Activated CD8-positive, alpha-beta T cell treated with anti-CD3 and anti-CD28 coated beads for 36 hours (primary cell): ENCODE measurements at regions of chr5 and their contacts with region 1.

Region 1: GRCh38 chr5:174311531-174312269 is 266.2 kb downstream of the NSG2 start:
- DNase-seq: peak; percentile 73
- ATAC-seq: peak; percentile 74
- H3K4me3 Mint-ChIP-seq: no peak overlapping the region
- H3K27ac Mint-ChIP-seq: no peak overlapping the region
- H3K4me1 Mint-ChIP-seq: no peaks in the 10 kb centered on the region
- H3K27me3 Mint-ChIP-seq: peaks cover 23% of the 10 kb centered on the region
- CTCF ChIP-seq: peak; percentile 90

Region 2: DNA sequence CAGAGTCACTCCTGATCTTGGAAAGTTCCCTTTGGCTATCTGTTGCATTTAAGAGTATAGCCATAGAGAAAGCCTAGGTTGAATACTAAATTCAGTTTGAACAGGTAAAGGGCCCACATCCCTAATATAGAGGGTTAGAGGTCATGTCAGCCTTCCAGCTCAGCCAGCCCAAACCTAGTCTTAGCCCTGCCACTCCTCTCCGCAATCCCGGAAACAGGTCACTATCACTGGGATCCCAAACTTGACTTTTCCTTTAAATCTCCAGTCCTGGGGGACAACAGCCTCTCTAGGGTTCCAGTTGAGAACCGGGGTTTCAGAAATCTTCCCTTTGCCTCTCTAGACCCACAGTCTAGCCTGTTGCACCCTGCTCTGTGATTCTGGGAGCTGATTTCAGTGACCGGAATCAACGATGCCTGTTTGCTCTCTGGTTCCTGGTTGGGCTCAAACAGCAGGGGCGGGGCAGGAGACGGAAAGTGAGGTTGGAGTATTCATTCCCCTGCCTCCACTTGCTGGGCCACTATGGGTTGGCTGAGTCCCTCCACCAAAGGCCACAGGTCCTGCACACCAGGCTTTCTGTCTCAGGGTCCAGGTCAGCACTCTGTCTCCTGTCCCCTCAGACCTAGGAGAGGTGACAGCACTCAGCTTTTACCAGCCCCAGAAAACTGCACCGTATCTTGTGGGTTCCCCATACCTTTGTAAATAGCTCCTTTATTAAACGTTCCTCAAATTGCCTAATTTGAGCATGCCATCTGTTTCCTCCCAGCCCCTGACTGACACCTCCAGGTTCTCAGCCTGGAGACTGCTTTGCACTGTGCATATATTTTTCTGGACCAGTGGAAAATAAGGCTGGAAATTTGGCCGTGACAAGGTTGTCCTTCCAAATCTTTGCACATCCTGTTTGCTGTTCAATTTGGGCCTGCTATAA is 447.3 kb before region 1 on chr5:
- CTCF ChIA-PET with region 1: no interaction called
- POLR2A ChIA-PET with region 1: no interaction called
- intact Hi-C with region 1: no loop called
- DNase-seq: no peak
- ATAC-seq: no peak
- H3K4me3 Mint-ChIP-seq: no peak overlapping the region
- H3K27ac Mint-ChIP-seq: no peak overlapping the region
- H3K4me1 Mint-ChIP-seq: no peaks in the 10 kb centered on the region
- H3K27me3 Mint-ChIP-seq: no peaks in the 10 kb centered on the region
- CTCF ChIP-seq: no peak

Region 3: DNA sequence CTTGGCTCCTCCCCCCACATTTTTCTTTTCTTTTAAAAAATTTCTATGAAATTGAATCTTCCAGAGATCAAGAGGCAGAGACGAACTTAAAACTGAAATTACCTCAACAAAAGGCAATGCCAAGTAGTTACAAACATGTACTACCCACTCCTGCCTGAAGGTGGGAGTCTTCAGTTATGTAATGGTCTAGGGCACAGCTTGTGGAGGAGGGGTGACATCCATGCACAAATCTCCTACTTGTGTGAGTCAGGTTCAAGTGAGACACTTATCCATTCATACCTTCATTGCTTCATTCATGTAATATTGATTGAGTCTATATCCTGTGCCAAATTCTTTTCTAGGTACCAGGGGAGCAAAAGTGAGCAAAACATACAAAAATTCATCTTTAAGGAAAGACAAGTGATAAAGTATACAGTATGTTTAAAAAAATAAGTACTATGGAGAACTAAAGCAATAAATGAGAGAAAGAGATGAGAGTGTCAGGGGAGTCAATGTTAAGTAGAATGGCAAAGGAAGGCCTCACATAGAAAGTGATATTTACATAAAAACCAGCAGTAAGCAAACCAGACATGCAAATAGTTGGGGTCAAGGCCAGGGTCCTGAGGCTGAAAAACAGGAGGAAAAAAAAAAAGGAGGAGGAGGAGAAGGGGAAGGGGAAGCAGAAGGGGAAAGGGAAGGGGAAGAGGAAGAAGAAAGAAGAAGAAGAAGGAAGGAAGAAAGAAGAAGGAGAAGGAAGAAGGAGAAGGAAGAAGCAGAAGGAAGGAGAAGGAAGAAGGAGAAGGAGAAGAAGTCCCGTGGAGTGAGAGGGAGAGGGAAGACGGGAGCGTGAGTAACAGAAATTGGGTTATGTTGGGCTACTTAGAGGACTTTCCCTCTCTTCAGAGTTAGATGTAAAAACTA is 291.1 kb before region 1 on chr5:
- CTCF ChIA-PET with region 1: interaction called, 4 read pairs
- POLR2A ChIA-PET with region 1: no interaction called
- intact Hi-C with region 1: loop called (anchors 5 kb)
- DNase-seq: peak; percentile 37
- ATAC-seq: no peak
- H3K4me3 Mint-ChIP-seq: no peak overlapping the region
- H3K27ac Mint-ChIP-seq: no peak overlapping the region
- H3K4me1 Mint-ChIP-seq: no peaks in the 10 kb centered on the region
- H3K27me3 Mint-ChIP-seq: peaks cover 24% of the 10 kb centered on the region
- CTCF ChIP-seq: peak; percentile 30

Region 4: GRCh38 chr5:174177976-174178555 is 133.6 kb before region 1 on chr5:
- CTCF ChIA-PET with region 1: no interaction called
- POLR2A ChIA-PET with region 1: no interaction called
- intact Hi-C with region 1: no loop called
- DNase-seq: no peak
- ATAC-seq: no peak
- H3K4me3 Mint-ChIP-seq: no peak overlapping the region
- H3K27ac Mint-ChIP-seq: no peak overlapping the region
- H3K4me1 Mint-ChIP-seq: no peaks in the 10 kb centered on the region
- H3K27me3 Mint-ChIP-seq: peaks cover 17% of the 10 kb centered on the region
- CTCF ChIP-seq: no peak

Region 5: GRCh38 chr5:174251305-174252000 is 60.2 kb before region 1 on chr5:
- CTCF ChIA-PET with region 1: no interaction called
- POLR2A ChIA-PET with region 1: no interaction called
- intact Hi-C with region 1: no loop called
- DNase-seq: no peak
- ATAC-seq: no peak
- H3K4me3 Mint-ChIP-seq: no peak overlapping the region
- H3K27ac Mint-ChIP-seq: no peak overlapping the region
- H3K4me1 Mint-ChIP-seq: no peaks in the 10 kb centered on the region
- H3K27me3 Mint-ChIP-seq: peaks cover 5% of the 10 kb centered on the region
- CTCF ChIP-seq: no peak

Region 6: DNA sequence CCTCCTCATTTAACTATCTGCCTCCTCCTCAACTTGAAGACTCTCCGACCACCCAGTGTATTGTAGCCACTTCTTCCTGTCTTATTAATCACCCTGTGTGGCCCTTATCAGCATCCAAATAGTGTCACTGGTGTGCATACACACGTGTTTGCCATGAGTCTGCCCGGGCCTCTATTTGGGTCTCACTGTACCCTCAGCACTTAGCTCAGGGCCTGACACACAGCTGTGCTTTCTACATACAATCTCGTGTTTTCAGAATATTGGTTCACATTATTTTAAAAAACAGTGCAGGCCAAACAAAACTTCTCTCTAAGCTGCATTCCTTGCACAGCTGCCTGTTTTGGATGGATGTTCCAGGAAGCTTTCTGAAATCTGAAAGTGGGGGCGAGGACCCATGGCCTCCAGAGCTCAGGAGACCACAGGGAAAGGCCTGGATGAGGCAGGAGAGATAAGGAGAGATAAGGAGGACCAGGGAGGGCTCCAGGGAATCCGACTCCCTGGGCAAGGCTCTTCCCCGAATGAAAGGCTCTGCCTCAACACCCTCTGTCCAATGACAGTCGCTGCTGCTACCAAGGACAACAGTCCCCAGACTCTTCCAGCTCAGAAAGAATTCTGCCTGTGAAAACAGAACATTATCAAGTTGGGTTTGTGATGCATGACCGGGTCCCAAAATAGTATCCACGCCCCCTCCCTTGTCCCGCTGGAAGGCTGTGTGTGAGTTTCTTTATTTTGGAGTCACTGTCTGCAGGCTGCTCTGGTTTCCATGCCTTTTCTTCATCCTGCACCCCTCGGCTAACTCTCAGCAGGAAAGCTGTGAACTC is 10.5 kb before region 1 on chr5:
- CTCF ChIA-PET with region 1: interaction called, 18 read pairs
- POLR2A ChIA-PET with region 1: no interaction called
- intact Hi-C with region 1: no loop called
- DNase-seq: no peak
- ATAC-seq: no peak
- H3K4me3 Mint-ChIP-seq: no peak overlapping the region
- H3K27ac Mint-ChIP-seq: no peak overlapping the region
- H3K4me1 Mint-ChIP-seq: no peaks in the 10 kb centered on the region
- H3K27me3 Mint-ChIP-seq: peaks cover 8% of the 10 kb centered on the region
- CTCF ChIP-seq: no peak

Region 7: GRCh38 chr5:174327317-174328236 is 15.9 kb after region 1 on chr5:
- CTCF ChIA-PET with region 1: interaction called, 13 read pairs
- POLR2A ChIA-PET with region 1: no interaction called
- intact Hi-C with region 1: no loop called
- DNase-seq: peak; percentile 69
- ATAC-seq: peak; percentile 56
- H3K4me3 Mint-ChIP-seq: no peak overlapping the region
- H3K27ac Mint-ChIP-seq: no peak overlapping the region
- H3K4me1 Mint-ChIP-seq: no peaks in the 10 kb centered on the region
- H3K27me3 Mint-ChIP-seq: peaks cover 16% of the 10 kb centered on the region
- CTCF ChIP-seq: peak; percentile 76